GM13977 (cell line): ENCODE measurements at regions of chr5 and their contacts with region 1.

Region 1: GRCh38 chr5:58886315-58887207 is 303.7 kb downstream of the RAB3C start:
- DNase-seq: peak; percentile 54
- CTCF ChIP-seq: peak; percentile 87

Region 2: GRCh38 chr5:59007460-59008063 is 121.0 kb after region 1 on chr5:
- in situ Hi-C with region 1: loop called (anchors 25 kb)
- DNase-seq: peak; percentile 23
- CTCF ChIP-seq: peak; percentile 46

Region 3: DNA sequence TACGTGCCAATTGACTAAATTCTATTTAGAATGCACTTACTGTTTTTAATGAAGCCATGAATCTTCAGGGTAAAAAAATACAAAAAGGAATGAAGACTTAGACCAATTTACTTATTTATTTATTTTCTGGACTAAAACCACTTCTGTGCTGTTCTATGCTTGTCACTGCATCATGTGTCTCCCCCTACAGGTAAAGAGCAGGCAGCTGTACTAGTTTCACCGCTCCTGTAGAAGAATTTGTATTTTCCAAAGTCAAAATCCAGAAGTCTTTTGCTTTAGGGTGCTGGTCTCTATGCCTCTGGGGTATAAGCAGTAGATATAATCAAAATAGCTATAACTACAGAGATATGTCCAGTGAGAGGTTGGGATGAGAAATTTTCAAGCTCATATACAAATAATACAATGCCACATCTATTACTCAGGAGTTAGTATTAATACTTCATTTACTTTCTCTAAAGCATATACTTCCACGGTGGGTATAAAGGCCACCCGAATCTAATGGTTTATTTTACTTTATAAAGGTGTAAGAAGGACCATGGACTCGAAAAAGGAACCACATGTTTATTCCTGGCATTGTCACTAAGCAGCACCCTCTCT is 287.8 kb after region 1 on chr5:
- in situ Hi-C with region 1: loop called (anchors 25 kb)
- DNase-seq: peak; percentile 26
- CTCF ChIP-seq: peak; percentile 77